ENCODE measurements at regions of chr5 and their contacts with region 1.

Region 1: DNA sequence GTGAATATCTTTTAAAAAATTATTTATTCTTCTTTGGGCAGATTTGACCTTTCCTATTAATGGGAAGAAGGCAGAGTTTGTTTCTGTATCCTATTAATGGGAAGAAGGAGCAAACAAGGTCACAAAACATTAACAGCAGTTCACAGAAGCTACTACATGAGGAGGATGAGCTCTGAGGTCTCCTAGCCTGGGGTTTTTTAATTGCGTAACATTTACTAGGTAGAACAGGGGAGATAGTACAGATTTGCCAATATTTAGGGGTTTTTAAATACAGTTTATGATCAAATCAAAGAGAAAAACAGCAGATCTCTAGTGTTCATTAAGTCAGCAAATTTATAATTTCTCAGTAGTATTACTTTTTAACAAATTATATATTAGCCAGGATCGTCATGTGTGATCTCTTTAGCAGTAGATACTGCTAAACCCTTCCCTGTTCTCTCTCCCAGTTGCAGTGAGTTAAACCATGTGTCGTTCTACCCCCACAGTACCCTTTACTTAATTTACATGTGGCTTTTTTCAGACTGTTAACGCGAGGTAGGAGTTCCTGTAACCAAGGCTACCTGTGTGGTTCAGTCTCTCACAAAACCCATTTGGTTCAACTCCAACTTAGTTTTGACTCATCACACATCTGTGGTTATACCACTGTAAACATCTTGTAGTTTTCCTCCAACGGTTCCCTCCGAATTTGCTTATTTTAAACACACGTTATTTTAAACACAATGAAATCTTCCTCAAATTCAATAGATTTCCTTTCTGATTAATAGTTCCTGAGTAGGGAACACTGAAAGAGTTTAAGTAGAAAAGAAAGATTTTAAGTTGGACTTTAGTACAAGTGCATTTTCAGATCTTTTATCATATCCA is 13.3 kb downstream of the SLC25A46 start:
- DNase-seq: peak in 2 of 9 donors; percentile 8 to 30
- ATAC-seq: peak; percentile 82
- H3K4me3 ChIP-seq: no peak overlapping the region
- H3K4me3 Mint-ChIP-seq: peak overlapping the region in 1 of 10 donors; percentile 68
- H3K27ac ChIP-seq: no peak overlapping the region
- H3K27ac Mint-ChIP-seq: peak overlapping the region in 8 of 9 donors; percentile 5 to 84 (median 59)
- H3K4me1 ChIP-seq: peaks cover 0 to 12% of the 10 kb centered on the region in 2 donors
- H3K4me1 Mint-ChIP-seq: peaks cover 15 to 47% (median 34%) of the 10 kb centered on the region in 7 donors
- H3K27me3 ChIP-seq: no peaks in the 10 kb centered on the region
- H3K27me3 Mint-ChIP-seq: no peaks in the 10 kb centered on the region

Region 2: GRCh38 chr5:111530298-111530740 is 778.2 kb after region 1 on chr5:
- CTCF ChIA-PET with region 1: no interaction called
- POLR2A ChIA-PET with region 1: no interaction called
- intact Hi-C with region 1: loop called in 1 of 2 experiments (anchors 2 kb)
- DNase-seq: peak; percentile 51 to 94 (median 78)
- ATAC-seq: peak; percentile 100
- H3K4me3 ChIP-seq: peak overlapping the region; percentile 6
- H3K4me3 Mint-ChIP-seq: peak overlapping the region; percentile 1 to 78 (median 66)
- H3K27ac ChIP-seq: peak overlapping the region; percentile 34
- H3K27ac Mint-ChIP-seq: peak overlapping the region; percentile 6 to 90 (median 76)
- H3K4me1 ChIP-seq: peaks cover 9 to 13% of the 10 kb centered on the region in 2 donors
- H3K4me1 Mint-ChIP-seq: peaks cover 10 to 28% (median 14%) of the 10 kb centered on the region in 7 donors
- H3K27me3 ChIP-seq: no peaks in the 10 kb centered on the region
- H3K27me3 Mint-ChIP-seq: peaks cover 0 to 3% (median 0%) of the 10 kb centered on the region in 5 donors

Measured in naive thymus-derived CD4-positive, alpha-beta T cell (primary cell).